Activated B cell treated with CpG ODN at 0.5 μM for 24 hours (primary cell): ENCODE measurements at regions of chr13 and their contacts with region 1.

Region 1: DNA sequence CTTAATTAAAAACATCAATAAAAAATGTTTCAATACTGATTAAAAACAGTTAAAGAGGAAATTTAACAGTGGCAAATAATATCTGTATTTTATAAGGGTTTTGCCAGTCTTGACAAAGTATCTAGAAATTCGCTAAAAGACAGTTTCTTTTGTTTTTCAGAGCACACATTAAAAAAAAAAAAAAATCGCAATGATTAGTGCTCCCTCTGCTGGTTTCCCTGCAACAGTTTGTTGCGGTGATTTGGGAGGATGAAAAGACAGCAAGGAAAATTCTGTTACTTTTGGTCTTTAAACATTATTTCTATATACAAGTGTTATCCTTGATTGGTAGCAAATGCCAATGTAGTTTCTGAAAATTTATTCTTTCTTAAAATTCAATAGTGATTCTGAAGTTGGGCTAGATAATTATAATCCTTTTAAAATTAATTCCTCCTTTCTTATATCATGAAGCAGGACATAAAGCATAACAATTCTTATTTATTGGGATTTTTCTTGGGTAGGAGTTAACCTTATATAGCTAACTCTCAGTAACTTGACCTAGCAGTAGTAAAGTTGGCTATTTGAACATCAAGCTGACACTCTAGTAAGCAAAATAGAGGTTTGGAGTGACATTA is 23.1 kb upstream of the SPRY2 start:
- DNase-seq: no peak
- ATAC-seq: no peak
- H3K4me3 Mint-ChIP-seq: no peak overlapping the region
- H3K27ac Mint-ChIP-seq: no peak overlapping the region
- H3K4me1 Mint-ChIP-seq: peaks cover 2% of the 10 kb centered on the region
- H3K27me3 Mint-ChIP-seq: no peaks in the 10 kb centered on the region
- CTCF ChIP-seq: no peak

Region 2: DNA sequence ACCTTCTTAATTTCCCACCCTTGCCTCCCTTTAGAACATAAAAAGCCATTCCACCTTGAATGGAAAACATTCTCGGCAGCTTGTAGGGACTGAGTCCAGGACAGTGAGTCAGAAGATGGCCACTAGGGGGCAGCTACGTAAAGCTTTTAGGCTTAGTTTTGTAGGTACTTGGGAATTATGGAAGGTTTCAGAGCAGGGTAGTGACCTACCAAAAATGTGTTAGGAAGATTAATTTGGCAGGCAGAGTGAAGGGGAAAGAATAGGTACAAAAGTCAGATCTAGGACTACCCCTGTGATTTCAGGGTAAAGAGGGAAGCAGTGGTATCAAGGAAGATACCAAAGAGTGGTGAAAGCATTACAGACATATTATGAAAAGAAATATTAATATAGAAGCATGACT is 684.7 kb before region 1 on chr13:
- CTCF ChIA-PET with region 1: interaction called, 7 read pairs
- POLR2A ChIA-PET with region 1: no interaction called
- intact Hi-C with region 1: loop called (anchors 1 kb)
- DNase-seq: no peak
- ATAC-seq: no peak
- H3K4me3 Mint-ChIP-seq: no peak overlapping the region
- H3K27ac Mint-ChIP-seq: no peak overlapping the region
- H3K4me1 Mint-ChIP-seq: no peaks in the 10 kb centered on the region
- H3K27me3 Mint-ChIP-seq: no peaks in the 10 kb centered on the region
- CTCF ChIP-seq: peak; percentile 52

Region 3: DNA sequence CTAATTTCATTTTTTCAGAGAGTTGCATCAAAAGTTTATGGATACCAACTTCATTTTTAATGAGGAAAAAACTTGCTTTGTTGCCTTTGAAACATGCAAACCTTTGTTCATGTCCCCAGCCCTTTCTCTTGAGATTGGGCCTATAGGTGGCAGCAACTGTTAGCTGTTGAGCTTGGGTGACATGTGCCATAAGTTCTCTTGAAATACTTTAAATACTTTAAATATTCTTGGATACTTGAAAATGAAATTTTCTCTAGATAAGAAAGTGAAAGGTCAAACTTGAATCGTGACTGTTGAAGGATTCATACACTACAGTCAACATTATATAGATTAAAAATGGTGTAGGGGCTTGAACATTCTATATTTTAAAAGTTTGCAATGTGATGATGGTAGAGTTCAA is 588.2 kb before region 1 on chr13:
- CTCF ChIA-PET with region 1: interaction called, 7 read pairs
- POLR2A ChIA-PET with region 1: no interaction called
- intact Hi-C with region 1: loop called (anchors 1 kb)
- DNase-seq: no peak
- ATAC-seq: no peak
- H3K4me3 Mint-ChIP-seq: no peak overlapping the region
- H3K27ac Mint-ChIP-seq: no peak overlapping the region
- H3K4me1 Mint-ChIP-seq: no peaks in the 10 kb centered on the region
- H3K27me3 Mint-ChIP-seq: peaks cover 2% of the 10 kb centered on the region
- CTCF ChIP-seq: no peak

Region 4: GRCh38 chr13:79973533-79973963 is 390.4 kb before region 1 on chr13:
- CTCF ChIA-PET with region 1: no interaction called
- POLR2A ChIA-PET with region 1: no interaction called
- intact Hi-C with region 1: loop called (anchors 1 kb)
- DNase-seq: no peak
- ATAC-seq: peak; percentile 66
- H3K4me3 Mint-ChIP-seq: no peak overlapping the region
- H3K27ac Mint-ChIP-seq: no peak overlapping the region
- H3K4me1 Mint-ChIP-seq: no peaks in the 10 kb centered on the region
- H3K27me3 Mint-ChIP-seq: no peaks in the 10 kb centered on the region
- CTCF ChIP-seq: no peak

Region 5: DNA sequence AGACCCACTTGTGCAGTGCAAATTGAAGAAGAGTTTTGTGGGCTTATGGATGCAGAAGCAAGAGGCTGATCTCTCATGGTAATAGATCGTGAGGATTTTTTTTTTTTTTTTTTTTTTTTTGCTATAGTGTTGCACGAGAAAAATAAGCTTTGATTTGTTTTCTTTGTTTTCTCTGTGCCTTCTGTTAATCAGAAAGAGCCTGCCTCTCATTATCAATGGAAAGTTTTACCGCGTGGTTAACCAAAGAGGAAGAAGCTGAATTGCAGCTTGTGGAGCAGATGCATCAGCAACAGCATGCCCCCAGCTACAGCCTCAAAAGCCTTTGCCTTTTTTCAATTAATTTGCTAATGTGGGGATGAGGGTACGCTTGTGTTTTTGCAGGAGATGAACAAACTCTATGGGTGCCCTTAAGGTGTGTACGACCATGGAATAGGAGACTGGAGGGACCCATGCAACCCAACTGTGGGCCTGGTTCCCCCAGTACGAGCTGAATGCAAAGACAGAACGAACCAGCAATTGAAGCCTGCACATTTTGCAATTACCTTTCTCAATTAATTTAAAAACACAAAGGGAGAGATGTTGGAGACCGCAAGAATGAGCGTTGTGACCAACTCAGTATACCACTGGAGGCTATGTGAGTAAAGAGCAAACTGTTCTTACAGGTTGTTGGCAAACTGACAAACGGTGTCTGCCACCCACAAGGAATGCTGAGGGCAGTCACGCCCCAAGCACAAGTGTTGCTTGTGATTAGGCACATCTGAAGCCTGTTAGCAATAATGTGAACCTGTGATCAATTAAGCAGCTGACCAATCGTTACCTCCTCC is 35.6 kb after region 1 on chr13:
- CTCF ChIA-PET with region 1: interaction called, 3 read pairs
- POLR2A ChIA-PET with region 1: no interaction called
- intact Hi-C with region 1: loop called (anchors 2 kb)
- DNase-seq: peak; percentile 14
- ATAC-seq: peak; percentile 64
- H3K4me3 Mint-ChIP-seq: peak overlapping the region; percentile 49
- H3K27ac Mint-ChIP-seq: peak overlapping the region; percentile 80
- H3K4me1 Mint-ChIP-seq: peaks cover 44% of the 10 kb centered on the region
- H3K27me3 Mint-ChIP-seq: no peaks in the 10 kb centered on the region
- CTCF ChIP-seq: no peak